Left cardiac atrium (tissue), 4 donors: ENCODE measurements at regions of chr10 and their contacts with region 1.

Region 1: DNA sequence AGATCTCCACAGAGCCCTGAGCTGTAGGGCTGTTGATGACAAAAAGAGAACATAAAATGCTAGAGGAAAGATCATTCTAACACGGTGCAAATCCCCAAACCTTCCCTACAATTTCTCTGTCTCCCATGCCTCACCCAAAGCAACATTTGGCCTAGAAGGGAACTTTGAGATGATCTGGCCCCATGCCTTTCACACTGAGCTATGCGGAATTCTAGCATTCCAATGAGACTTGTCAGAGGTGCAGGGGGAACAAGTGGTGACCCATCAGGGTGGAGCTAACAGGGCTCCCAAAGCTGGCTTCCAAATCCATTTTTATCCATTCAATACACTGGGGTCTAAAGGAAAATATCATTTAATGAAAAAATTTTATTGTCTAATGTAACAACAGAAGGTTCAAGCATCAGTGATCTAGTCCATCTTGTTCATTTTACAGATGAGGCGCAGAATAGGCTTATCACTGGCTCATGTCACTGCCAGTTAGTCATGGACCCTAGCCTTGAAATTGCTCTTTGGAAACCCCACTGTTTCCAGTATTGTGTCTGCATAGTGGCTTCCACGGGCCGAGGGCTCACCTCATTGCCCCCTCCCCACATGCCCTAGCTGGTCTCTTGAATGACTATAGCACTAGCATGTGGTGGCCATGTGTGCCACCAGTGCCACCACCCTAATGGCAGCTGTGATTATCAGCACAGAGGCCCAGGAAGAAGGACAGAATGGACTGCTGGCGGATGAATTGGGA is 1001.0 kb downstream of the LRMDA start:
- DNase-seq: peak; percentile 48
- ATAC-seq: peak; percentile 64 to 83

Region 2: GRCh38 chr10:76397181-76397881 is 35.1 kb before region 1 on chr10:
- intact Hi-C with region 1: loop called in 1 of 2 experiments (anchors 5 kb)
- DNase-seq: peak; percentile 68
- ATAC-seq: peak; percentile 56 to 89